MCF 10A (cell line): ENCODE measurements at regions of chr3 and their contacts with region 1.

Region 1: DNA sequence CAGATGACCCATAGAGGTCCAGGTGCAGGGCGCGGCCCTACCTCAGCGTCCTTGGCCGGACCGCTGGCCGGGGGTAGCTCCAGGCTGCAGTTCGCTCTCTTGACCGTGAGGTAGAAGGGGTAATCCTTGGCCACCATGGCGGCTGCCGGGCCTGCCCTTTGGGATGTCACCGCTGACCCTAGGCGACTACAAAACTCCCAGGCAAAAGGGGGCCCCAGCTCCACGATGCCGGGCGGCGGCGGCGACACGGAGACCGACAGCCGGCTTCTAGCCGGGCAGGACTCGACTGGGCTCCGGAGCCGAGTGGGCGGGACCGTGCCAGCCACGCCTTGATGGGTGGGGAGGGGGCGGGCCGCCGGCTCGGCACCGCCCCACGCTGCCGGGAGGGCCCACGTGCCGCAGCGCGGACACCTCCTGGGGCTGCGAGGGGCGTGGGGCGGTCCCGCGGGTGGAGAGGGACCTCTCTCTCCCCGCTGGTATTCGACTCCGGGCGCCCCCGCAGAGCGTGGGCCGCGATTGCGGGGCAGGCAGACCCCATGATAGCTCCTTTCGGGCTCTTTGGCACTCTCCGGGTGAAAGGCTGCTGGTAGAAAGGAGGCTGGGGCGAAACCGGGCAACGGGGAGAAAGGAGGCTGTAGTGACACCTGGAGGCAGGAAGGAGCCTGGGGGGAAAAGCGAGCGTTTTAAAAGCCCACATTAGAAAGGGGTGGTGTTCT is at the start of gene ARHGEF3:
- DNase-seq: peak; percentile 85
- H3K4me3 Mint-ChIP-seq: peak within 1 kb of the TSS; percentile 78
- H3K27ac Mint-ChIP-seq: peak within 1 kb of the TSS; percentile 0
- H3K4me1 Mint-ChIP-seq: peaks cover 24% of the 10 kb centered on the region
- H3K27me3 Mint-ChIP-seq: no peaks in the 10 kb centered on the region
- CTCF ChIP-seq: peak; percentile 47
- total RNA-seq, gene ARHGEF3: 10.6 and 13.1 TPM in 2 replicates

Region 2: GRCh38 chr3:56347219-56347871 is 454.5 kb before region 1 on chr3:
- CTCF ChIA-PET with region 1: no interaction called
- POLR2A ChIA-PET with region 1: no interaction called
- intact Hi-C with region 1: loop called (anchors 10 kb)
- DNase-seq: peak; percentile 63
- H3K4me3 Mint-ChIP-seq: no peak overlapping the region
- H3K27ac Mint-ChIP-seq: no peak overlapping the region
- H3K4me1 Mint-ChIP-seq: peaks cover 6% of the 10 kb centered on the region
- H3K27me3 Mint-ChIP-seq: peaks cover 37% of the 10 kb centered on the region
- CTCF ChIP-seq: no peak

Region 3: GRCh38 chr3:56573501-56573900 is 228.3 kb before region 1 on chr3:
- CTCF ChIA-PET with region 1: no interaction called
- POLR2A ChIA-PET with region 1: no interaction called
- intact Hi-C with region 1: no loop called
- DNase-seq: no peak
- H3K4me3 Mint-ChIP-seq: no peak overlapping the region
- H3K27ac Mint-ChIP-seq: no peak overlapping the region
- H3K4me1 Mint-ChIP-seq: no peaks in the 10 kb centered on the region
- H3K27me3 Mint-ChIP-seq: no peaks in the 10 kb centered on the region
- CTCF ChIP-seq: no peak

Region 4: DNA sequence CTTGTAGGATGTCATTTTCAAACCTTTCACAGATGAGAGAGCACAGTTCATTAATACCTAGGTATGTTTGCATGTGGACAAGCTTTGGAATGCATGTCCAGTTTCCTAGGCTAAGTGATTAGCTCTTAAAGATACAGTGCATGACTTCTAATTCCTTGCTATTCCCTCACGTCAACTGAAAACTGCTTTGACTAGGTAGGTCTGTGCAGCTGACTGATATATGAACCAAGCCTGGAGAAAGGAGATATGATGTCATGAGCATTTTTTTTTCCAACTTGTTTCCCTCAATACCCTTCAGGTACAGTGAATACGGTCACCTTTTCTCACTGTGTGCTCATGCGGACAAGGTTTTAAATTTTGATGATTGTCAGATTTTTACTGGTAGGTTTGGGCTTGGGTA is 77.1 kb before region 1 on chr3:
- CTCF ChIA-PET with region 1: interaction called, 13 read pairs
- POLR2A ChIA-PET with region 1: interaction called, 4 read pairs
- intact Hi-C with region 1: no loop called
- DNase-seq: no peak
- H3K4me3 Mint-ChIP-seq: no peak overlapping the region
- H3K27ac Mint-ChIP-seq: no peak overlapping the region
- H3K4me1 Mint-ChIP-seq: no peaks in the 10 kb centered on the region
- H3K27me3 Mint-ChIP-seq: no peaks in the 10 kb centered on the region
- CTCF ChIP-seq: no peak

Region 5: DNA sequence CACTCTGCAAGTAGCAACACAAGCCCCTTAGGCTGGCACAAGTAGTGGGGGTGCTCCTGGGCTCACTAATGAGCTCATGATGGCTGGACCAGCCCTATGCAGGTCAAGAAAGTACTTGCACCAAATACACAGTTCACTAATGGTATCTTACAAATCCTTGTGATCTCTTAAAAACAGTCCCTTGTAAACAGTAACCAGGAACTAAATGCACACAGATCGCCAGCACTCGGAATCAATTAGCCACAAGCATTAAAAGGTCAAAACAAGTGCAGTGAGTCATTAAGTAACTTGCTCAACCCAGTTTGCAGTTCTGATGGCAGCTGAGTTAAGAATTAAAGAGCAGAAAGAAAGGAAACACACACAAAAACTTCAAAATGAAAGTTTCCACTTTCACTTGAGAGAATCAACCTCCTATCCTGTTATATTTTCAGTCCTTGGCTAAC is 43.3 kb before region 1 on chr3:
- CTCF ChIA-PET with region 1: interaction called, 16 read pairs
- POLR2A ChIA-PET with region 1: interaction called, 13 read pairs
- intact Hi-C with region 1: no loop called
- DNase-seq: peak; percentile 83
- H3K4me3 Mint-ChIP-seq: peak overlapping the region; percentile 53
- H3K27ac Mint-ChIP-seq: peak overlapping the region; percentile 73
- H3K4me1 Mint-ChIP-seq: peaks cover 20% of the 10 kb centered on the region
- H3K27me3 Mint-ChIP-seq: no peaks in the 10 kb centered on the region
- CTCF ChIP-seq: no peak

Region 6: DNA sequence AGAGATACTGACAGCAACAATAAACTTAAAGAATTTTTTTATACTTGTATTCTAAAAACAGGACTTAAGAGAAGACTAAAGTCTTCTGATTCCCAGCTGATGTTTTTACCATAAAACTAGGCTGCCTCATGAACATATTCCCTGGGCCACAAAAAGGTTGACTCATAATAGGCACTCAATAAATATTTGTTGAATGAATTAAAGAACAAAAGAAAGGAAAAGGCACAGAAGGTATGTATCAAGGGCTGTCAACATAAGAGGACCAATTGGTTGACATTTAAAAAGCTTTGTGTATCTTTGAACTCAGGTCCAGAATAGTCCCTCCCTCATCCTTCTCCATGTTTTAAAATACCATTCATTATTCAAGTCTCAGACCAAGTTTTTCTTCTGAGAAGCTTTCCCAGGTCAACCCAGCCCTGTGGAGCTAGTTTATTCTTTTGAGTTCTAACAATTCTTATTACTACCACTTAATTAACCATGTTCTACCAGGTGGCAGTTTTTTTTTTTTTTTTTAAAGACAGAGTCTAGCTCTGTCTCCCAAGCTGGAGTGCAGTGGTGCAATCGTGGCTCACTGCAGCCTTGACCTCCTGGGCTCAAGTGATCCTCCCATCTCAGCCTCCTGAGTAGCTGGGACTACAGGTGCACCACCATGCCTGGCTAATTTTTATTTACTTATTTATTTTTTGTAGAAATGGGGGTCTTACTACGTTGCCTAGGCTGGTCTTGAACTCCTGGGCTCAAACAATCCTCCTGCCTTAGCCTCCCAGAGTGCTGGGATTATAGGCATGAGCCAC is 17.4 kb after region 1 on chr3:
- CTCF ChIA-PET with region 1: interaction called, 37 read pairs
- POLR2A ChIA-PET with region 1: no interaction called
- intact Hi-C with region 1: no loop called
- DNase-seq: no peak
- H3K4me3 Mint-ChIP-seq: no peak overlapping the region
- H3K27ac Mint-ChIP-seq: no peak overlapping the region
- H3K4me1 Mint-ChIP-seq: peaks cover 4% of the 10 kb centered on the region
- H3K27me3 Mint-ChIP-seq: no peaks in the 10 kb centered on the region
- CTCF ChIP-seq: no peak

Region 7: DNA sequence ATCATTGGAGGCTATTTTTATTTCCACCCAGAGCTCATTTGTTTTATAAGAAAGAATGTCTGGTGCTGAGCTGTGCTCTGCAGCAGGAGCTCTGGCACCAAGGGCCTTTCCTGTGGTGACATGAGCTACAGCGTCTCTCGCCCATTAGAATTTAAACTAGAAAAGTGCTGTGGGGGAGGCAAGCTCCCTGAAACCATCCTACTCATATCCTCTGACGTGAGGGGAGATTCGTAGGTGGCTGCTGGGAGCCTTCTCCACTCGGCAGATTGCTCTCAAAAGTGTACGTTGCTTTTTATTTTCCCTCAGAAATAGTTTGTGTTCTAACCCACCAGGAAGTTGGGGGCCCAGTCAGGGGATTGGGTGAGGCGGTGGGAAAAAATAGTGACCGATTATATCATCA is 76.3 kb after region 1 on chr3:
- CTCF ChIA-PET with region 1: no interaction called
- POLR2A ChIA-PET with region 1: no interaction called
- intact Hi-C with region 1: no loop called
- DNase-seq: no peak
- H3K4me3 Mint-ChIP-seq: no peak overlapping the region
- H3K27ac Mint-ChIP-seq: no peak overlapping the region
- H3K4me1 Mint-ChIP-seq: peaks cover 9% of the 10 kb centered on the region
- H3K27me3 Mint-ChIP-seq: no peaks in the 10 kb centered on the region
- CTCF ChIP-seq: no peak

Region 8: GRCh38 chr3:57221883-57222282 is 420.1 kb after region 1 on chr3:
- CTCF ChIA-PET with region 1: interaction called, 11 read pairs
- POLR2A ChIA-PET with region 1: interaction called, 4 read pairs
- intact Hi-C with region 1: no loop called
- DNase-seq: peak; percentile 39
- H3K4me3 Mint-ChIP-seq: no peak overlapping the region
- H3K27ac Mint-ChIP-seq: no peak overlapping the region
- H3K4me1 Mint-ChIP-seq: peaks cover 5% of the 10 kb centered on the region
- H3K27me3 Mint-ChIP-seq: no peaks in the 10 kb centered on the region
- CTCF ChIP-seq: peak; percentile 40